ENCODE measurements at regions of chr5 and their contacts with region 1.

Region 1: GRCh38 chr5:120457839-120458507 is 6.1 kb upstream of the PRR16 start:
- DNase-seq: peak; percentile 87
- ATAC-seq: peak; percentile 69 to 84

Region 2: GRCh38 chr5:119200795-119201194 is 1257.2 kb before region 1 on chr5:
- intact Hi-C with region 1: no loop called
- DNase-seq: no peak
- ATAC-seq: no peak

Region 3: GRCh38 chr5:120055858-120056257 is 402.1 kb before region 1 on chr5:
- intact Hi-C with region 1: loop called in 1 of 2 experiments (anchors 5 kb)
- DNase-seq: no peak
- ATAC-seq: peak; percentile 62 to 73

Region 4: DNA sequence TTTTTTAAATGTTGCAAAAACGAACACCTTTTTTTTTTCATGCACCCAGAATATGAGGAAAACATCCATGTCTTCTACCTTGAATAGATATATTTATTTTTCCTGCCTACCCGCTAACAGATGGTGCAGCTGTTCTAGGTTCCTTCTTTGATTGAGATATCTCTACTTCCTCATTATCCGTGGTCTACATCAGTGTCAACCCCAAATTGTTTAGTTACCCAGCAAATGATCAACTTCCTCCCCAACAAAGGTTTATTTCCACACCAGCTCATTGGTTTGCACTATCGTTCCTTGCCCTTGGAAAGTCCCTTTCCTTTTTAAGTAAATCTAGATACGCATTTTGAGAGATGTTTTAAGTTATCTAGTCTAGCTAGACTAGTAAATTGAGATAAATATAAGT is 172.6 kb after region 1 on chr5:
- intact Hi-C with region 1: no loop called
- DNase-seq: no peak
- ATAC-seq: no peak

Region 5: GRCh38 chr5:120749737-120750136 is 291.8 kb after region 1 on chr5:
- intact Hi-C with region 1: no loop called
- DNase-seq: no peak
- ATAC-seq: no peak